ENCODE measurements at regions of chr1 and their contacts with region 1.

Region 1: GRCh38 chr1:94061513-94062443 is 59.2 kb downstream of the ABCA4 start:
- DNase-seq: peak; percentile 81 to 86
- H3K4me3 ChIP-seq: no peak overlapping the region
- H3K4me3 Mint-ChIP-seq: no peak overlapping the region
- H3K27ac Mint-ChIP-seq: peak overlapping the region; percentile 28
- H3K4me1 ChIP-seq: peaks cover 32% of the 10 kb centered on the region
- H3K4me1 Mint-ChIP-seq: peaks cover 22% of the 10 kb centered on the region
- H3K27me3 ChIP-seq: no peaks in the 10 kb centered on the region
- H3K27me3 Mint-ChIP-seq: no peaks in the 10 kb centered on the region
- CTCF ChIP-seq: peak; percentile 72

Region 2: DNA sequence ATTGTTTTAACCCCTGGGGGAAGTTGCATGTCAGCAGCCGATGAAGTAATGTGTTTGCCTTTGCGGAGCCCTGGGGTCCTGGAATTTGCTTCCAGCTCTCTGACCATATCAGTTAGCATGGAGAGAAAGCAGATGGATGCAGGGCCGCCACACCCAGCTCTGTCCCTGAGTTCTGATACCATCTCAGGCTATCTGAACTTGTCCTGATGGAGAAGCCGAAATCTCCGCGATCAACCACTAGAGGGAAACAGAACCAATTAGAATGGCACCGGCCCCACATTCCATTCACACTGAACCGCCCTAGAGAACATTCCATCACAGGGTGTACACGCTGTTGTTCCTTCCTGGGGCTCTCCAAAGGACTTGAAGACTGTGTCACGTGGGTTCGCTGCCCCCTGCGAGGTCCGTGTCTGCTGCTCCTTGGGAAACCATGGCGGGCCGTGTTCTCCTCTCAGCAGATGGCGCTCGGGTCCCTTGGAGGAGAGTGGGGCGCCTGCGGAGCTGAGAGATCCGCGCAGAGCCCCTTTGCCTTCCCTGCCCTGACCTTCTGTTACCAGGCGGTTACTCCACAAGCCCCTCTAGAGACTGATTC is 16.2 kb before region 1 on chr1:
- CTCF ChIA-PET with region 1: interaction called, 14 read pairs
- POLR2A ChIA-PET with region 1: no interaction called
- intact Hi-C with region 1: loop called (anchors 1 kb)
- DNase-seq: peak; percentile 91 to 95
- H3K4me3 ChIP-seq: peak overlapping the region; percentile 12
- H3K4me3 Mint-ChIP-seq: peak overlapping the region; percentile 24
- H3K27ac Mint-ChIP-seq: peak overlapping the region; percentile 68
- H3K4me1 ChIP-seq: peaks cover 9% of the 10 kb centered on the region; the same call in 1 of the 2 replicates
- H3K4me1 Mint-ChIP-seq: peaks cover 7% of the 10 kb centered on the region
- H3K27me3 ChIP-seq: no peaks in the 10 kb centered on the region
- H3K27me3 Mint-ChIP-seq: no peaks in the 10 kb centered on the region
- CTCF ChIP-seq: peak; percentile 40 to 73

Region 3: DNA sequence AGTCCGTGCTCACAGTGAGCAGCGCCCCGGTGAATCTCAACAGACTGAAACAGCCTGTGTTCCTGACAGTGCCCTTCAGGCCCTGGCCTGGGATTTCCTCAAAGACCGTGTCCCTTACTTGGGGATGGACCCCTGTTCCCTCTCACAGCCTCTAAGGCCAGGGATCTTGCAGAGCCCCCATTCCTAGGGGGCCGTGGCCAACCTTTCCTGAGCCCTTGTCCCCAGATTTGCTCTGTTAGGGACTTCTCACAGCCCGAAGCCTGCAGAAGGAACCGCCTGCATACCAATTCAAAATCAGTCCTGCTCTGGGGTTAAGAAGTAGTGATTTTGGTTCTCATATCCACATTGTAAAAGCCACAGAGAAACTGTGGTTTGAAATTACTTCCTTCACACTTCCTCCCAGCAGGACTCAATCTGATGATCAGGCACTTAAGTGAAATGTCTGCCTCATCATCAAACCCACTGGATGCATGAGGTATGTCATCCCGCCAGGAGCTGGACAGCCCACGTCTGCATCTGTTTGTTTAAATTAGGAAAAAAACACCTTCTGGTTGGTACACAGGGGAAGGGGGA is 44.3 kb after region 1 on chr1:
- CTCF ChIA-PET with region 1: interaction called, 6 read pairs
- POLR2A ChIA-PET with region 1: interaction called, 4 read pairs
- intact Hi-C with region 1: loop called (anchors 2 kb)
- DNase-seq: no peak
- H3K4me3 ChIP-seq: no peak overlapping the region
- H3K4me3 Mint-ChIP-seq: no peak overlapping the region
- H3K27ac Mint-ChIP-seq: peak overlapping the region; percentile 91
- H3K4me1 ChIP-seq: peaks cover 40% of the 10 kb centered on the region
- H3K4me1 Mint-ChIP-seq: peaks cover 23% of the 10 kb centered on the region
- H3K27me3 ChIP-seq: no peaks in the 10 kb centered on the region
- H3K27me3 Mint-ChIP-seq: no peaks in the 10 kb centered on the region
- CTCF ChIP-seq: no peak

Region 4: DNA sequence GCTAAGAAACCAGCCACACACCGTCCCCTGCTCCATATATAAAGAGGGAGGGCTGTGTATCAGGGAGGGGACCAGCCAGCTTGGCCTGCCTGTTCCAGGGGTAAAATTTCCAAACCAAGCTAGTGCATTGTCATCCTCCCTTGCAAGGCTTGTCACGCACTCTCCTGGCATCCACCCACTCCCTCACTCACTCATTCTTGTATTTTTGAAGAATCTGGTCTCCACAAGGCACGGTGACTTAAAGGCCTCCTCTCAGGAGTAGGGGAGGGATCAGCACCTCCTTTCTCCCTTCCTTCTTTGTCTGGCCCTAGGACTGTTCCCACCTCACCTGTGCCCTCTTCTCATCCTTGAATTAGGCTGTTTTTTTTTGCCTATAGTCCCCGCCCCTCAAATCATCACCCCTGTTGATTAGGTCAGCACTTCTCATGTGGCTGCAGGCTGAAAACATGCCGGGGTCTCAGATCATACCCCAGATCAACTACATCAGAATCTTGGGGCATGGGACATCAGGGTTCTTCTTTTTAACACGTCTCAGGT is 54.2 kb after region 1 on chr1:
- CTCF ChIA-PET with region 1: no interaction called
- POLR2A ChIA-PET with region 1: no interaction called
- intact Hi-C with region 1: loop called (anchors 1 kb)
- DNase-seq: no peak
- H3K4me3 ChIP-seq: no peak overlapping the region
- H3K4me3 Mint-ChIP-seq: peak overlapping the region; percentile 18
- H3K27ac Mint-ChIP-seq: peak overlapping the region; percentile 88
- H3K4me1 ChIP-seq: peaks cover 57% of the 10 kb centered on the region
- H3K4me1 Mint-ChIP-seq: peaks cover 55% of the 10 kb centered on the region
- H3K27me3 ChIP-seq: no peaks in the 10 kb centered on the region
- H3K27me3 Mint-ChIP-seq: no peaks in the 10 kb centered on the region
- CTCF ChIP-seq: no peak

Region 5: GRCh38 chr1:94125551-94126514 is 64.1 kb after region 1 on chr1:
- CTCF ChIA-PET with region 1: interaction called, 3 read pairs
- POLR2A ChIA-PET with region 1: no interaction called
- intact Hi-C with region 1: loop called (anchors 1 kb)
- DNase-seq: peak; percentile 74 to 83
- H3K4me3 ChIP-seq: no peak overlapping the region
- H3K4me3 Mint-ChIP-seq: peak overlapping the region; percentile 58
- H3K27ac Mint-ChIP-seq: peak overlapping the region; percentile 70
- H3K4me1 ChIP-seq: peaks cover 24% of the 10 kb centered on the region
- H3K4me1 Mint-ChIP-seq: peaks cover 11% of the 10 kb centered on the region
- H3K27me3 ChIP-seq: no peaks in the 10 kb centered on the region
- H3K27me3 Mint-ChIP-seq: no peaks in the 10 kb centered on the region
- CTCF ChIP-seq: peak; percentile 13 to 16

Region 6: DNA sequence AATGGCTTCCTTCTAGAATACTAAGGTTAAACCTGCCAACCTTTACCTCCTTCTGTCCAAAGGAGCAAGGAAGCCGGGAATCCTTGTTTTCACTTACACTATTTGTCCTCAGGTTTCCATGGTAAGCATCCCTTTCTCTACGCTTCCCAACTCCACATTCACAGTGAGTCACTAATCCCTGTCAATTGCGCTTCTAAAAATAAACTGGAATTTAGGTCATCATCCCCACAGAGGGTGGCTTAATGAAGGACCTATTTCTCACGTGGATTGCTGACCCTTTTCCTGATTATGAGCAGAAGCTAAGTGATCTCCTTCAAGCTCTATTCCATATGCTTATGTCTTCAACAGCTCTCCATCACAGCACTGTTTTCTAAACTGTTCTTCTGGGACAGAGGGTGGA is 99.0 kb after region 1 on chr1:
- CTCF ChIA-PET with region 1: no interaction called
- POLR2A ChIA-PET with region 1: no interaction called
- intact Hi-C with region 1: loop called (anchors 5 kb)
- DNase-seq: no peak
- H3K4me3 ChIP-seq: no peak overlapping the region
- H3K4me3 Mint-ChIP-seq: no peak overlapping the region
- H3K27ac Mint-ChIP-seq: peak overlapping the region; percentile 52
- H3K4me1 ChIP-seq: peaks cover 4% of the 10 kb centered on the region; the same call in 1 of the 2 replicates
- H3K4me1 Mint-ChIP-seq: peaks cover 7% of the 10 kb centered on the region
- H3K27me3 ChIP-seq: no peaks in the 10 kb centered on the region
- H3K27me3 Mint-ChIP-seq: no peaks in the 10 kb centered on the region
- CTCF ChIP-seq: no peak

Region 7: GRCh38 chr1:94237291-94238226 is 175.8 kb after region 1 on chr1 and contains the start of gene ARHGAP29:
- CTCF ChIA-PET with region 1: interaction called, 16 read pairs
- POLR2A ChIA-PET with region 1: interaction called, 9 read pairs
- intact Hi-C with region 1: loop called (anchors 1 kb)
- DNase-seq: peak; percentile 88 to 92
- H3K4me3 ChIP-seq: peak within 1 kb of the TSS; percentile 81
- H3K4me3 Mint-ChIP-seq: peak within 1 kb of the TSS; percentile 88
- H3K27ac Mint-ChIP-seq: peak within 1 kb of the TSS; percentile 85
- H3K4me1 ChIP-seq: peaks cover 48% of the 10 kb centered on the region
- H3K4me1 Mint-ChIP-seq: peaks cover 41% of the 10 kb centered on the region
- H3K27me3 ChIP-seq: no peaks in the 10 kb centered on the region
- H3K27me3 Mint-ChIP-seq: no peaks in the 10 kb centered on the region
- CTCF ChIP-seq: no peak
- total RNA-seq, gene ARHGAP29: 30.3 and 31.4 TPM in 2 replicates

Region 8: GRCh38 chr1:94258873-94259331 is 197.1 kb after region 1 on chr1:
- CTCF ChIA-PET with region 1: no interaction called
- POLR2A ChIA-PET with region 1: no interaction called
- intact Hi-C with region 1: no loop called
- DNase-seq: no peak
- H3K4me3 ChIP-seq: no peak overlapping the region
- H3K4me3 Mint-ChIP-seq: no peak overlapping the region
- H3K27ac Mint-ChIP-seq: no peak overlapping the region
- H3K4me1 ChIP-seq: no peaks in the 10 kb centered on the region
- H3K4me1 Mint-ChIP-seq: peaks cover 6% of the 10 kb centered on the region
- H3K27me3 ChIP-seq: no peaks in the 10 kb centered on the region
- H3K27me3 Mint-ChIP-seq: no peaks in the 10 kb centered on the region
- CTCF ChIP-seq: no peak

Measured in Caco-2 (cell line).